Breast epithelium (tissue), 4 donors: ENCODE measurements at regions of chr3 and their contacts with region 1.

Region 1: GRCh38 chr3:167287308-167287707 is 92.8 kb downstream of the ZBBX start:
- DNase-seq: no peak
- H3K4me3 ChIP-seq: no peak overlapping the region
- H3K27ac ChIP-seq: no peak overlapping the region
- H3K4me1 ChIP-seq: no peaks in the 10 kb centered on the region
- H3K27me3 ChIP-seq: no peaks in the 10 kb centered on the region
- CTCF ChIP-seq: no peak
- POLR2A ChIP-seq: no peak

Region 2: DNA sequence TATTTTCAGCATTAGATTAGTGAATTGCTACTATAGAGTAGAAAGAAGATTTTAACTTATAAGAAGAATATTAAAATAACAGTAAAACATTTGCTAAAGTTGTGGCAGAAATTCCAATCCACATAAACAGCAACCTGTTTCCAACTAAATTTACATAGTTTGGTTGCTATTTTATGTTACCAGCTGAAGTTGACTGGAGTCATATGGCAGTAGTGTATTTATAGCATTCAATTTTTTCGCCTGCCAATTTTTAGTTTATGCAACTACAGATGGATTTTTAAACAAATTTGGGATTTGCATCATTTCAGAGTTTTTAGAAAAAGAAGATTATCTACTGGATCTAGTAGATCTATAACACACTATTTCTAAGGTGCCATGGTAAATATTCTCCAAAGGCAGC is 1117.6 kb before region 1 on chr3:
- intact Hi-C with region 1: loop called (anchors 5 kb)
- DNase-seq: no peak
- H3K4me3 ChIP-seq: no peak overlapping the region
- H3K27ac ChIP-seq: no peak overlapping the region
- H3K4me1 ChIP-seq: no peaks in the 10 kb centered on the region
- H3K27me3 ChIP-seq: no peaks in the 10 kb centered on the region
- CTCF ChIP-seq: no peak
- POLR2A ChIP-seq: no peak